ENCODE measurements at regions of chr7 and their contacts with region 1.

Region 1: DNA sequence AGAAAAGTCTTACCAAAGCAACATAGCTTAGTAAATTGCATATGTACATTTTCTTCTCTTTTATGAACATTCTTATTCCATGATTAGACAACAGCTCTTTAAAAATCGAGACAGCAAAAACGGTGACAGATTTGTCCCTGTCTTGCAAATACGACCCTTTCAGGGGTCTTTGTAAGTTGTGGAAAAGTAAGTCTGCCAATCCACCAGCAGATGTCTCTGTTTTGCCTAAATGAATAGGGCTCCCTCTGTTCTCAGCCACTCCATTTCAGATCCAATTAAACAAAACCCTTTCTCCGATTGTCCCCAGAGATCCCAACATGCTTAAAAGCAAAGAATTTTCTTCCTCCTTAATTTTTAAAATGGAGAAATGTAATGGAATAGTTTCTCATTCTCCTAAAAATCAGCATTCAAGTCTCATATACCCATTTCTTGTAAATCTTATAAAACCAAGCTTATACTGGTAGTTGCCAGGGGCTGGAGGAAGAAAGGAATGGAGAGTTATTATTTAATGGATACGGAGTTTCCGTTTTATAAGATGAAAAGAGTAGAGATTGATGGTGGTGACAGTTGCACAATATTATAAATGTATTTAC is 61.0 kb upstream of the NFE2L3 start:
- DNase-seq: peak in 4 of 14 experiments; percentile 31 to 73 (median 64)
- ATAC-seq: peak; percentile 71
- H3K4me3 ChIP-seq: no peak overlapping the region
- H3K4me3 Mint-ChIP-seq: no peak overlapping the region
- H3K27ac ChIP-seq: no peak overlapping the region
- H3K27ac Mint-ChIP-seq: no peak overlapping the region
- H3K4me1 ChIP-seq: peaks cover 7% of the 10 kb centered on the region
- H3K4me1 Mint-ChIP-seq: peaks cover 40% of the 10 kb centered on the region
- H3K27me3 ChIP-seq: no peaks in the 10 kb centered on the region
- H3K27me3 Mint-ChIP-seq: no peaks in the 10 kb centered on the region
- CTCF ChIP-seq: peak; percentile 92

Region 2: DNA sequence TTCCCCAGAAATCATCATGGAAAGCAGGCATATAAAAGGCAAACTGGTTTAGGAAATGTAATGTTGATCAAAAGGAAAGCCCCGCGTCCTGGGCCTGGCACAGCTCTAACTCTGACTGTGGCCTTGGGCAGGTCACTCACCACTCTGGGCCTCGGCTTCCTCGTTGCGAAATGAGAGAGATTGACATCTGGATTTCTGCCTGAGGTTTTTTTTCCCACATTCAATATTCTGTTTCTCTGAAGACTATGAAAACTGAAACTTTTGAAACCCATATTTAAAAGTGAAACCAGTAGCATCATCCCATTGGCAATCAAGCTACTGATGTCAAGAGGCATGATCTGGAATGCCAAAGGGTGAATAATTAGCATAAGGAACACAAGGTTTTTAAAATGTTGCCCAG is 493.1 kb before region 1 on chr7:
- CTCF ChIA-PET with region 1: no interaction called
- POLR2A ChIA-PET with region 1: no interaction called
- intact Hi-C with region 1: no loop called
- DNase-seq: no peak
- ATAC-seq: no peak
- H3K4me3 ChIP-seq: no peak overlapping the region
- H3K4me3 Mint-ChIP-seq: no peak overlapping the region
- H3K27ac ChIP-seq: no peak overlapping the region
- H3K27ac Mint-ChIP-seq: no peak overlapping the region
- H3K4me1 ChIP-seq: no peaks in the 10 kb centered on the region
- H3K4me1 Mint-ChIP-seq: no peaks in the 10 kb centered on the region
- H3K27me3 ChIP-seq: no peaks in the 10 kb centered on the region
- H3K27me3 Mint-ChIP-seq: no peaks in the 10 kb centered on the region
- CTCF ChIP-seq: no peak

Region 3: GRCh38 chr7:25886387-25887240 is 204.4 kb before region 1 on chr7:
- CTCF ChIA-PET with region 1: no interaction called
- POLR2A ChIA-PET with region 1: no interaction called
- intact Hi-C with region 1: no loop called
- DNase-seq: no peak
- ATAC-seq: no peak
- H3K4me3 ChIP-seq: no peak overlapping the region
- H3K4me3 Mint-ChIP-seq: no peak overlapping the region
- H3K27ac ChIP-seq: no peak overlapping the region
- H3K27ac Mint-ChIP-seq: no peak overlapping the region
- H3K4me1 ChIP-seq: no peaks in the 10 kb centered on the region
- H3K4me1 Mint-ChIP-seq: no peaks in the 10 kb centered on the region
- H3K27me3 ChIP-seq: peaks cover 4 to 8% of the 10 kb centered on the region in 2 experiments
- H3K27me3 Mint-ChIP-seq: peaks cover 38% of the 10 kb centered on the region
- CTCF ChIP-seq: no peak

Region 4: DNA sequence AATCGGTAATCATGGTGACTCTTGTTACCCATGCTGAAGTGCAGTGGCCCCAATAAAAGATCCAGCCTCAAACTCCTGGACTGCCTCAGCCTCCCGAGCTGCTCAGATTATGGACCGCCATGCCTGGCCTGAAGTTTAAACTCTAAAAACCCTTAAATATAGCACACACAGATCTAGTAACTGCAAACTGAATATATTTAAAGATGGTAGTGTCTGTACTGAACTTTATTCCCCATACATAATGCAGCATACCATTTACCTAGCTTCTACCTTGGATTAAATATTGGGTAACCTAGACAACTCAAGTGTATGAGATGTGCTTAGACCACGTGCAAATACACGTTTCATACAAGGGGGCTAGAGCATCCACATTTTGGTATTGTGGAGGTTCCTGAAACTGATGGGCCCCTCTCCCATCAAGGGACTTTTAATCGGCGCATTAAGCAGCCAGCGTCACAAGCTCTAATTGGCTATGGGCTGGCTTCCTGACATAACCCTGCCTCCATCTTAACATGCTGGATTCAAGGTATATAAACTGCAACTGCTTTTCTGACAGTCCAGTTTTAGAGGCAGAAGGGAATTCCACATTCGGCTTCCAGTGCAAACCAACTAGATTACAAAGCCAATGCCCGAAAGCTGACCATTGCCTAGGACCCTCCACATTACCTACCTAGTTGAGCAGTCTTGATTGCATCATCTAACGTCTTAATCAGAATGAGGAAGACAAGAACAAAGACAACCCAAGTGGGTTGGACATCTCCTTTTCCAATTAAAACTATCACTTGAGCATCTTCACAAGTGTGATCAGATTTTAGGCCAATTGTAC is 96.6 kb after region 1 on chr7:
- CTCF ChIA-PET with region 1: interaction called, 10 read pairs
- POLR2A ChIA-PET with region 1: interaction called, 27 read pairs
- intact Hi-C with region 1: no loop called
- DNase-seq: no peak
- ATAC-seq: peak; percentile 18
- H3K4me3 ChIP-seq: no peak overlapping the region
- H3K4me3 Mint-ChIP-seq: peak overlapping the region; percentile 21
- H3K27ac ChIP-seq: peak overlapping the region in 1 of 2 donors; percentile 0
- H3K27ac Mint-ChIP-seq: peak overlapping the region; percentile 54
- H3K4me1 ChIP-seq: peaks cover 21% of the 10 kb centered on the region
- H3K4me1 Mint-ChIP-seq: peaks cover 90% of the 10 kb centered on the region
- H3K27me3 ChIP-seq: no peaks in the 10 kb centered on the region
- H3K27me3 Mint-ChIP-seq: no peaks in the 10 kb centered on the region
- CTCF ChIP-seq: no peak

Region 5: DNA sequence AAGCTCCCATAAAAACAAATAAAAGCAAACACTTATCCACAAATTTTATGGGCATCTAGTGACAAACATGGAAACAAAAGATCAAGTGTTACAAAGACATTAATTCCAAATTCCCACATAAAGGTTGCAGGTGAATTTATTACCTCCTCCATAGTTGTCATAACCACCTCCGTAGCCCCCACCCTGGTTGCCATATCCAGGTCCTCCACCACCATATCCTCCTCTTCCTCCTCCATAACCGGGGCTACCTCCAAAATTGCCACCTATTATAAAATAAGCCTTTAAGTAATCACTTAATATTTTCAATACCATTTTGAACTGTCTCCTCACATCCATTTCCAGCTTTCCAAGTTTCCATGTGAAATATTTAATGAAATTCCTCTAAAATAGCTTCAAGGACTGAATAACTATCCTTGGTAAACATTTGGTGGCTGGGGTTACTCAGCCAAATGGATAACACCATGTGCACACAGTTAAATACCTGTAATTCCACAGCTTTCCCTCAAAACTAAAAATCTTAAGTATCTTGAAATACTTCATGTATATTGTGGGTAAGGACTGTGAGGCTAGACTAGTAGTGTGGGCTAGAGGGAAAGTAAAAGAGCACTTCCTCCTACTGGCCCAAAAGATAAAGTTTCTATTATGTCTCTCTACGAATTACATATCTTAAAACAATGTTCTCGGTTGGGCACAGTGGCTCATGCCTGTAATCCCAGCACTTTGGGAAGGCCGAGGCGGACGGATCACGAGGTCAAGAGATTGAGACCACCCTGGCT is 102.6 kb after region 1 on chr7:
- CTCF ChIA-PET with region 1: interaction called, 30 read pairs
- POLR2A ChIA-PET with region 1: interaction called, 98 read pairs
- intact Hi-C with region 1: loop called (anchors 1 to 2 kb)
- DNase-seq: peak in 1 of 14 experiments; percentile 34
- ATAC-seq: no peak
- H3K4me3 ChIP-seq: no peak overlapping the region
- H3K4me3 Mint-ChIP-seq: peak overlapping the region; percentile 87
- H3K27ac ChIP-seq: peak overlapping the region; percentile 5 to 33
- H3K27ac Mint-ChIP-seq: peak overlapping the region; percentile 83
- H3K4me1 ChIP-seq: peaks cover 39% of the 10 kb centered on the region
- H3K4me1 Mint-ChIP-seq: peaks cover 94% of the 10 kb centered on the region
- H3K27me3 ChIP-seq: no peaks in the 10 kb centered on the region
- H3K27me3 Mint-ChIP-seq: no peaks in the 10 kb centered on the region
- CTCF ChIP-seq: no peak

Region 6: DNA sequence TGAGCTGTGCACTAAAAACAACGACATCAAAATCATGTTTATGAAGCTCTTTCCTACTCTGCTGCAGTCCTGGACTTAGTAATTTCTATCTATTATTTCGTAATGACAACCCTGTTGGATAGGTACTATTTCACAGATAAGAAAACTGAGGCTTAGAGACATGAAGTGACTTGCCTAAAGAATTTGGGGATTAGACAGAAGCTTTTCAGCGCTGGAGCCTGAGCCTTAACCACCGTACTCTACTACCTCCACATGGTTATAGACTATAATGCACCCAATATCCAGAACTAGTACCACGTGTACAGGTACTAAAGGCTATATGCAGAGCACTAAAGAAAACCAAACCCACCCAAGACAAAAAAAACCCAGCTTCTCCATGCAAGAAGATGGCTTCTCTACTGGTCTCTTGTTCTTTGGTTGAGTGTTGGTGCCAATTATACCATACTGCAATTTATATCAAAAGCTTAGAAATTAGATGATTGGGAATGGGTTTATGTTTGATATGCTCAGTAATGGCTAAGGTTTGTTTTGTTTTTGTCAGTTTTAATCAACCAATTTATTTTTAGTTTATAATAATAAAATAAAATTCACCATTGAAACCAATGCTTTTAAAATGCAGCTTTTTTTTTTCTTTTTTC is 194.1 kb after region 1 on chr7:
- CTCF ChIA-PET with region 1: interaction called, 11 read pairs
- POLR2A ChIA-PET with region 1: interaction called, 5 read pairs
- intact Hi-C with region 1: loop called (anchors 1 to 2 kb)
- DNase-seq: peak in 3 of 14 experiments; percentile 38 to 52 (median 47)
- ATAC-seq: peak; percentile 98
- H3K4me3 ChIP-seq: no peak overlapping the region
- H3K4me3 Mint-ChIP-seq: no peak overlapping the region
- H3K27ac ChIP-seq: no peak overlapping the region
- H3K27ac Mint-ChIP-seq: no peak overlapping the region
- H3K4me1 ChIP-seq: peaks cover under 1% of the 10 kb centered on the region
- H3K4me1 Mint-ChIP-seq: peaks cover 6% of the 10 kb centered on the region
- H3K27me3 ChIP-seq: no peaks in the 10 kb centered on the region
- H3K27me3 Mint-ChIP-seq: no peaks in the 10 kb centered on the region
- CTCF ChIP-seq: peak; percentile 12

Region 7: DNA sequence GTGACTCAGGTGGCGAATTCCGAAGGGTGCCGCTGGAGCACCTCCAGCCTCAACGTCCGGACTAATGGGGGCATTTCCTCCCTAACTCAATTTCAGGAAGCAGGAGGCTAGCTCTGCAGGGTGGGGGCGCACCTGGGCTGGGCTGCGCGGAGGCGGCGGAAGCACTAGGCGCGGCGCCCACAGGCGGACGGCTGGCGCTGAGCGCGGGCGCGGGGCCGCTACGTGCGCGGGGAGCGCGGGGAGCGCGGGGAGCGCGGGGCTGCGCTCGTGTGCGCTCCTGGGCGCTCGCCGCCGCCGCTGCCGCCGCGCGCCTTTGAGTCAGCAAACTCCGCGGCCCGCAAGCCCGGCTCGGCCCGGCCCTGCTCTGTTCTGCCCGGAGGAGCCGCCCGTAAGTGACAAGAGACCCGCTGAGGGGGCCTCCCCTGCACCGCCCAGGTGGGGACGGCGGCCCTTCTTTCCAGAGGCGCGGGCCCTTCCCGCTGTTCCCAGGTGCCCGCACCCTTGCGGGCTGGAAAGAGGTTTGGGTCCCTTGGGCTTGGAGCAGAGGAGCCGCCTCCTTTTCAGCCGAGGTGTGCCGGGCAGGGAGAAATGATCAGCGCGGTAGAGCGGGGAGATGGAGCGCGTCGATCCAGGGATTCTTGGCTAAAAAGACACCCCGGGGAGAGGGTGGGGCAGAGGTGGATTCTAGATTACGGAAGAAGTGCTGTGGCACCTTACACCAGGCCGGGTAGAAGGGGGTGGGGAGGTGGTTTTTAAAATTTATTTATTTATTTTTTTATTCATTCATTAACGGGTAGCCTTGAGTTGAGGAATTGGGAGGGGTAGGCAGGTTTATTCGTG is 200.9 kb after region 1 on chr7 and contains the start of gene SNX10:
- CTCF ChIA-PET with region 1: interaction called, 4 read pairs
- POLR2A ChIA-PET with region 1: no interaction called
- intact Hi-C with region 1: loop called in 1 of 2 experiments (anchors 2 kb)
- DNase-seq: peak; percentile 40 to 91 (median 64)
- ATAC-seq: peak; percentile 82
- H3K4me3 ChIP-seq: peak within 1 kb of the TSS; percentile 89
- H3K4me3 Mint-ChIP-seq: peak within 1 kb of the TSS; percentile 95
- H3K27ac ChIP-seq: peak within 1 kb of the TSS; percentile 46 to 53
- H3K27ac Mint-ChIP-seq: peak within 1 kb of the TSS; percentile 72
- H3K4me1 ChIP-seq: peaks cover 38% of the 10 kb centered on the region
- H3K4me1 Mint-ChIP-seq: peaks cover 37% of the 10 kb centered on the region
- H3K27me3 ChIP-seq: no peaks in the 10 kb centered on the region
- H3K27me3 Mint-ChIP-seq: no peaks in the 10 kb centered on the region
- CTCF ChIP-seq: no peak
- total RNA-seq, gene SNX10: 4.6 to 5.8 TPM

Region 8: DNA sequence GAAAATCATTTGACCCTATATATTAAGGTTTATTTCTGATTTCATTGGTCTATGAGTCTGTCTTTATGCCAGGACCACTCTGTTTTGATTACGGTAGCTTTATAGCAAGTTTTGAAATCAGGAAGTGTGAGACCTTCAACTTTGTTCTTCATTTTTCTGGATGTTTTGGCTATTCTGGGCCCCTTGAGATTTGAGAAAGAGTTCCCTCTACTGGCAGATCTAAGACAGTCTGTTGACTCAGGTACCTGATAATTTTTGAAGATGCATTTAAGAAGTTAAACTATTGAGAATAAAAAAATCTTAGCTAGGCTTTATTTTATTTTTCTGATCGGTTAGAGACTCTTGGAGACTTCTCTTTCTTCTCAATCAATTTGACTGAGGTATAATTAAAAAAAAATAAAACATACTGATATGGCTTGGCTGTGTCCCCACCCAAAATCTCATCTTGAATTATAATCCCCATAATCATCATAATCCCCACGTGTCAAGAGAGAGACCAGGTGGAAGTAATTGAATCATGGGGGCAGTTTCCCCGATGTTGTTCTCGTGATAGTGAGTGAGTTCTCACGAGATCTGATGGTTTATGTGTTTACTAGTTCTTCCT is 409.8 kb after region 1 on chr7:
- CTCF ChIA-PET with region 1: no interaction called
- POLR2A ChIA-PET with region 1: no interaction called
- intact Hi-C with region 1: loop called in 1 of 2 experiments (anchors 5 kb)
- DNase-seq: peak in 3 of 14 experiments; percentile 23 to 39 (median 31)
- ATAC-seq: no peak
- H3K4me3 ChIP-seq: no peak overlapping the region
- H3K4me3 Mint-ChIP-seq: no peak overlapping the region
- H3K27ac ChIP-seq: no peak overlapping the region
- H3K27ac Mint-ChIP-seq: no peak overlapping the region
- H3K4me1 ChIP-seq: no peaks in the 10 kb centered on the region
- H3K4me1 Mint-ChIP-seq: no peaks in the 10 kb centered on the region
- H3K27me3 ChIP-seq: peaks cover 3% of the 10 kb centered on the region in 2 experiments
- H3K27me3 Mint-ChIP-seq: peaks cover 8% of the 10 kb centered on the region
- CTCF ChIP-seq: peak; percentile 46